HAP-1 (cell line): ENCODE measurements at regions of chr12 and their contacts with region 1.

Region 1: GRCh38 chr12:56518570-56518969 is 3.0 kb upstream of the RBMS2 start:
- DNase-seq: no peak
- H3K4me3 ChIP-seq: no peak overlapping the region
- H3K4me1 ChIP-seq: peaks cover 10% of the 10 kb centered on the region
- H3K27me3 ChIP-seq: no peaks in the 10 kb centered on the region

Region 2: DNA sequence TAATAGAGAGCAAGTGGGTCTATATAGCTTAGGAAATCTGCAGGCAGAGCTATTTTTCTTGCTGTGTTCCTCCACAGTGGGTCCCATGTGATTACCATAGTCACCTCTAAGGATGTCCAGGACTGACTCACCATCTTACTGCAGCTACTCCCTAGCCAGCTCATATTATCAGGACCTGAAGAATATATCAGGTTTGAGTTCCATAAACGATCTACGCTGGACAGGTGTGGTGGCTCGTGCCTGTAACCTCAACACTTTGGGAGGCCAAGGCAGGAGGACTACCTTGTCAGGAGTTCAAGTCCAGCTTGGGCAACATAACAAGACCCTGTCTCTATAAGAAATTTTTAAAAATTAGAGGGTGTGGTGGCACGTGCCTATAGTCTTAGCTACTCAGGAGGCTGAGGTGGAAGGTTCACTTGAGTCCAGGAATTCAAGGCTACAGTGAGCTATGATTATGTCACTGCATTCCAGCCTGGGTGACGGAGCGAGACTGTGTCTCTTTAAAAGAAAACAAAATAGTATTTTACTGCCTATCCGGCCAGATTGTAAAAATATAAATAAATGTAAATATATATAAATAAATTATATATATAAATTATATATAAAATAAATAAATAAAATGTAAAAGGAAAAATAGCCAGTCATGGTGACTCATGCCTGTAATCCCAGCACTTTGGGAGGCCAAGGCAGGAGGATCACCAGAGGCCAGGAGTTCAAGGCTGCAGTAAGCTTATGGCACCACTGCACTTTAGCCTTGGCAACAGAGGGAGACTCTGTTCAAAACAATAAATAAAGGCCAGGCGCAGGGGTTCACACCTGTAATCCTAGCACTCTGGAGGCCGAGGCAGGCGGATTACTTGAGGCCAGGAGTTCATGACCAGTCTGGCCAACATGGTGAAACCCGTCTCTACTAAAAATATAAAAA is 57.1 kb before region 1 on chr12:
- in situ Hi-C with region 1: no loop called
- DNase-seq: no peak
- H3K4me3 ChIP-seq: no peak overlapping the region
- H3K4me1 ChIP-seq: peaks cover 9% of the 10 kb centered on the region
- H3K27me3 ChIP-seq: no peaks in the 10 kb centered on the region

Region 3: GRCh38 chr12:56571126-56571525 is 52.6 kb after region 1 on chr12:
- in situ Hi-C with region 1: loop called (anchors 10 kb)
- DNase-seq: no peak
- H3K4me3 ChIP-seq: no peak overlapping the region
- H3K4me1 ChIP-seq: no peaks in the 10 kb centered on the region
- H3K27me3 ChIP-seq: no peaks in the 10 kb centered on the region

Region 4: DNA sequence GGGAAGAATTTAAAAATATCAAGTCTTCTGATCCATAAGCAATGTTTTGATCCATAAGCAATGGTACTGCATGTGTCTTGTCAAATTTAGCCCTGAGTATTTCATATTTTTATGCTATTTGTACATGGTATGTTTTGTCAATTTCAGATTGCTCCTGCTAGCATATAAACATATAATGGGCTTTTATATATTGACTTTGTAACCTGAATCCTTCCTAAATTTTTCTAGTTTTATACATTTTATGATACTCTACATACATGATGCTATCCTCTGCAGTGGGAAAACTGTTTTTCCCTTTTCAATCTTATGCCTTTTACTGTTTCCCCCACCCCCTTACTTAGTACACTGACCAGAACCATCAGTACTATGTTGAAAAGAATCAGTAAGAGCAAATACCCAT is 837.2 kb after region 1 on chr12:
- in situ Hi-C with region 1: no loop called
- DNase-seq: no peak
- H3K4me3 ChIP-seq: no peak overlapping the region
- H3K4me1 ChIP-seq: no peaks in the 10 kb centered on the region
- H3K27me3 ChIP-seq: no peaks in the 10 kb centered on the region